Esophagus squamous epithelium (tissue), 5 donors: ENCODE measurements at regions of chr22 and their contacts with region 1.

Region 1: GRCh38 chr22:42437488-42438292 is 5.5 kb upstream of the NFAM1 start:
- DNase-seq: no peak
- H3K4me3 ChIP-seq: peak overlapping the region; percentile 25 to 63 (median 46)
- H3K27ac ChIP-seq: peak overlapping the region; percentile 39 to 66 (median 50)
- H3K4me1 ChIP-seq: peaks cover 28 to 81% (median 49%) of the 10 kb centered on the region in 3 donors
- H3K27me3 ChIP-seq: peaks cover 0 to 18% (median 0%) of the 10 kb centered on the region in 4 donors
- CTCF ChIP-seq: peak; percentile 96 to 98 (median 97)
- POLR2A ChIP-seq: no peak

Region 2: DNA sequence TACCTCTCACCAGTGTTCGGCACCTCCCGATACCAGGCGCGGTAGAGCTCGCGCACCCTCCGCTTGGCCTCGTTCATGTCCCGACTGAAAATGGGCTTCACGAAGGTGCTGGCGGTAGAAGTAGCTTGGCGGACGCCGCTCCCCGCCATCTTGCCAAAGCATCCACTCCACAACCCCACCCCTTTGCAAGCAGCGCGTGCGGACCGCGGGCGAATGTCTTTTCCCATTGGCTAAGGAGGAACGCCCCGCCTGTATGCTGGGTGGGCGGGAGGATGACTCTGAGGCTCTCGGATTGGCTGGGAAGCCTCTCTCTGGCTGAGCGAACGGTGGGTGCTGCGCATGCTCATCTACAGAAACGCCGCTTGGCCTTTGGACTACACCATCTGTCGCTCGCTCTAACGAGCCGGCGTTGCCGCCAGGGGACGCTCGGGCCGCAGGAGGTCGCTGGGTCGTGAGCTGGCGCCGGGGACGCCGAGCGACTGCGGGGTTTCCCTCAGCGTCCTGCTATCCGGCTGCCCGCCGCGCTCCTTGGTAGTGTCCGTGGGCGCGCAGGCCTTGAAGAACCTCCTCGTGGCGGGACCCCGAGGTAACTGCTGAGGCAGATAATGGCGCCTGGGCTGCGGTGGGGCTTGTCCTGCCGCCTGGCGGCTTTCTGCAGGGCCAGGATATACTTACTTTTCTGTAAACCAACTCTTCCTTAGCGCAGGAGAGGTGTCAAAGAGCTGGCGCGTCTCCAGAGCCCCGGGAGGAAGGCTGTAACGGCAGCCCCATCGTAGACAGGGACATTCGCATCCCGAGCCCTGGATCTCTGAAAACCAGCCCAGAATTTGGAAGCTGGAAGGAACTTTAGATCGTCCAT is 346.9 kb before region 1 on chr22 and contains the start of gene NDUFA6:
- intact Hi-C with region 1: loop called (anchors 5 kb)
- DNase-seq: peak; percentile 97
- H3K4me3 ChIP-seq: peak within 1 kb of the TSS; percentile 74 to 91 (median 81)
- H3K27ac ChIP-seq: peak within 1 kb of the TSS; percentile 95 to 98 (median 98)
- H3K4me1 ChIP-seq: peaks cover 0 to 43% (median 17%) of the 10 kb centered on the region in 3 donors
- H3K27me3 ChIP-seq: no peaks in the 10 kb centered on the region
- CTCF ChIP-seq: peak; percentile 93 to 99 (median 97)
- POLR2A ChIP-seq: peak in 3 of 4 donors; percentile 89 to 93 (median 89)
- total RNA-seq, gene NDUFA6: 65.0 to 72.4 (median 67.1) TPM

Region 3: DNA sequence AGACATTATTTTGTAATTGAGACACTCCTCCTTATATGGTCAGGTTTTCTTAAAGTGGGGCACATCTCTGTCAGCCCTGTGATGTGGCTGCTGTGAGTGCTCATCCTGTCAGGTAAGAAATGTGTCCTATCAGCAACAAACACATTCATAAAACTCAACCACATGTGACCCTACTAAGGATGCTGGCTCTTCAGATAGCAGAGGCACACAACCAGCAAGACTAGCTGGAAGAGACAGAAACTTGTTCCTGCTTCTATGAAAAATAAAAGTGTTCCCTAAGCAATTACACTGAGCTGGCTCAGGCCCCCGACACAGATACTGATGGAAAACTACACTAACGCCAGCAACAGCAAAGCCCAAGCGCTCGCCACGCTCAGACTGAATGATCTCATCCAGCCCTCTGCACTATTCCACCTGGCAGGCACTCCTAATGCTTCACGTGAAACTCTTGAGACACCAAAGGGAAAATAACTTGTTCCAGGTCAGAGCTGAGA is 257.3 kb before region 1 on chr22:
- intact Hi-C with region 1: loop called (anchors 10 kb)
- DNase-seq: no peak
- H3K4me3 ChIP-seq: no peak overlapping the region
- H3K27ac ChIP-seq: peak overlapping the region in 3 of 4 donors; percentile 23 to 65 (median 39)
- H3K4me1 ChIP-seq: peaks cover 0 to 68% (median 25%) of the 10 kb centered on the region in 3 donors
- H3K27me3 ChIP-seq: no peaks in the 10 kb centered on the region
- CTCF ChIP-seq: no peak
- POLR2A ChIP-seq: no peak

Region 4: GRCh38 chr22:42277988-42278776 is 159.5 kb before region 1 on chr22:
- intact Hi-C with region 1: loop called (anchors 5 kb)
- DNase-seq: no peak
- H3K4me3 ChIP-seq: no peak overlapping the region
- H3K27ac ChIP-seq: no peak overlapping the region
- H3K4me1 ChIP-seq: peaks cover 2 to 80% (median 24%) of the 10 kb centered on the region in 3 donors
- H3K27me3 ChIP-seq: peaks cover 0 to 3% (median 0%) of the 10 kb centered on the region in 4 donors
- CTCF ChIP-seq: peak in 4 of 6 experiments; percentile 8 to 38 (median 28)
- POLR2A ChIP-seq: no peak